ENCODE measurements at regions of chr5 and their contacts with region 1.

Region 1: DNA sequence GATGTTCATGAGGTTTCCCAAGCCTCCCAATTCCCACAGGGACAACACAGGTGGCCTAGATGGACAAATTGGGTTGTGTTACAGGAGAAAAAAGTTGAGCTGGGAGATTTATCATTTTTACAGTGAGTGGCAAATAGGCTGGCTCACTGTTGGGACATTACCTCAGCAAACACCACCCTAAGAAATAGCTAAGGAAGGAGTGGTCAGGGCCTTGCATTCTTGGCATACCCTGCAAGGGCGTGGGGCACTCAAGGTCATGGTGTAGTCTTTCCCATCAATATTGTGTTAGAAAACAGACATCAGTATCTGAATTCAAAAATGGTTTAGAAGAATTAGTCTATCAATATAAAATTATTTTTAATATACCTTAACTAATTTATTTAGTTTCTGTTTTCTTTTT is 23.4 kb upstream of the CPLANE1 start:
- DNase-seq: no peak

Region 2: GRCh38 chr5:36006163-36006562 is 1266.4 kb before region 1 on chr5:
- intact Hi-C with region 1: no loop called
- DNase-seq: no peak

Region 3: GRCh38 chr5:37391591-37391990 is 119.0 kb after region 1 on chr5:
- intact Hi-C with region 1: loop called in 1 of 2 experiments (anchors 5 kb)
- DNase-seq: no peak

Measured in posterior vena cava (tissue), 2 donors.